Spleen (tissue), 13 donors: ENCODE measurements at regions of chr10 and their contacts with region 1.

Region 1: GRCh38 chr10:132452631-132453469 is 55.9 kb downstream of the PWWP2B start:
- DNase-seq: peak; percentile 98
- H3K4me3 ChIP-seq: peak overlapping the region in 5 of 8 donors; percentile 3 to 52 (median 9)
- H3K27ac ChIP-seq: peak overlapping the region; percentile 47 to 89 (median 72)
- H3K4me1 ChIP-seq: peaks cover 19 to 54% (median 34%) of the 10 kb centered on the region in 6 donors
- H3K27me3 ChIP-seq: peaks cover 0 to 3% (median 0%) of the 10 kb centered on the region in 7 donors
- CTCF ChIP-seq: peak; percentile 92 to 100 (median 99)
- POLR2A ChIP-seq: no peak

Region 2: DNA sequence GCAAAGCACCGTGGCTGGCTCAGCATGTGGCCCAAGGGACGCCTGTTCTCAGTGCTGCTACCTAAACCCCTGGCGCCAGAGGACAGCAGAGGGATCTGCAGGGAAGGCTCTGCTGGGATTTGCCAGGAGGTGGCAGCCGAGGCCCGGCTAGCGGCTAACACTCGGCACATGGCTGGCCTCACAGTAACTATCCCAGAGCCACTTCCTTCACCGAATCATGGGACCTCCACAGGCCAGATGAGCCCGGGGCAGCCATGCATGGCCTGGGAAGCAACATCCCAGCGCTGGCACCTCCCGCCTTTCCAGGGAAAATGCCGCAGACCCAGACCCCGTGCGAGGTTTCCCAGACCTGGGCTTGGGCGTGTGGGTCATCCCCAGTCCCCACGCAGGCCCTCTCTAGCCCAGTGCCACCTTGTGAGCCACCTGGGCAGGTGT is 229.7 kb before region 1 on chr10:
- intact Hi-C with region 1: loop called (anchors 5 kb)
- DNase-seq: peak; percentile 91
- H3K4me3 ChIP-seq: no peak overlapping the region
- H3K27ac ChIP-seq: peak overlapping the region in 1 of 8 donors; percentile 11
- H3K4me1 ChIP-seq: peaks cover 2 to 26% (median 13%) of the 10 kb centered on the region in 6 donors
- H3K27me3 ChIP-seq: no peaks in the 10 kb centered on the region
- CTCF ChIP-seq: peak; percentile 84 to 98 (median 91)
- POLR2A ChIP-seq: no peak

Region 3: DNA sequence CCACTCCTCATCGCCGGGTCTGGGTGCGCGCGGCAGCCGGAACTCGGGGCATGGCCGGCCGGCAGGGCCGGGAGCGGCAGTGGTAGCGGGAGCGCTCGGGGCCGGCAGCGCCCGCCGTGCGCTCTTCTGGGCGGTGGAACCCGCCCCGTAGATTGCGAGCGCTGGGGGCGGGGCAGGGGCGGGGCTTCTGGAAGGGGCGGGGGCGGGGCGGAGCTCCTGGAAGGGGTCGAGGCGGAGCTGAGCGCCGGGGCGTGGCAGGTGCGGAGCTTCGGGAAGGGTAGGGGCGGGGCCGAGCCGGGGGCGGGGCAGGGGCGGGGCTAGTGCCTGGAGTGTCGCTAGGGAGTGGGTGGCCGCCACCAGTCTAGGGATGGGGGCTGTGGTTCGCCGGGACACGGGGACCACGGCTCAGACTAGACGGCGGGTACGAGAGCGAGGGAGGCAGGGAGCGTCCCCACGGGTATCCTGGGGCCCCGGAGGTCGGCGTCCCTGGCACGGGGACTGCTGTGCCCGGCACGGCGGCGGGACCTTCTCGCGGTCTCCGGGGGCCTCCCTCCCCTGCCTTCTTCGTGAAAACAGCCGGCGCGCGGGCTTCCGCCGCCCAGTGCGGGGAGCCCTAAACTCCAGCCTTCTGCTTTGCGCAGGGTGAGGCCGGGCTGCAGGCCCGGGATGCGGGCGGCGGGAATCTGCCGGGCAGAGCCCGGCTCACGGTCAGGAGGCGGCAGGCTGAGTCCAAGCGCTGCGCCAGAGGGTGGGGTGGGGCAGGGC is 144.8 kb before region 1 on chr10 and contains the start of gene STK32C:
- intact Hi-C with region 1: no loop called
- DNase-seq: peak; percentile 97
- H3K4me3 ChIP-seq: peak within 1 kb of the TSS; percentile 92 to 99 (median 94)
- H3K27ac ChIP-seq: peak within 1 kb of the TSS; percentile 14 to 87 (median 80)
- H3K4me1 ChIP-seq: peaks cover 6 to 26% (median 20%) of the 10 kb centered on the region in 6 donors
- H3K27me3 ChIP-seq: peaks cover 0 to 44% (median 0%) of the 10 kb centered on the region in 7 donors
- CTCF ChIP-seq: peak in 2 of 11 experiments; percentile 9 to 24
- POLR2A ChIP-seq: peak in 1 of 3 donors; percentile 14
- total RNA-seq, gene STK32C: 9.6 to 27.8 (median 15.4) TPM

Region 4: DNA sequence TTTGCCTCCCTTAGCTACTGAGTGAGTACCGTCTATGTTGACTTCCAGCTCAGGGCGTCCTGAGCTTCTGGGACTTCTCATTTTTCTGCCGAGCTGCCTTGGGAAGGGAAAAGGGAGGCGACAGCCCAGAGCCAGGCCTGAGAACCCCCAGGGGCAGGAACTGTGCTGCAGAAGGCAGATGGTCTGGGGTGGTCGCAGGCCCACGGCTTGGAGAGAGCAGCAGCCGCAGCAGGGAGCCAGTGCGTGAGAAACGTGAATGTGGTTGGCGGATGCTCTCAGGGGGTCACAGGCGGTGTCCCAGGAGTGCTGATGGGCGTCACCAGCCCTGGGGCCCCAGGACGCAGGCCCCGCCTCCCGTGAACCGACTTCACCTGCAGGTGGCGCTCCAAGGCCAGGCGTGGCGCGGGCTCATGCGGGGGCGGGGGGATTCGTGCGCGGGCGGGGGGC is 65.1 kb before region 1 on chr10:
- intact Hi-C with region 1: loop called (anchors 5 kb)
- DNase-seq: peak; percentile 96
- H3K4me3 ChIP-seq: peak overlapping the region in 1 of 8 donors; percentile 51
- H3K27ac ChIP-seq: peak overlapping the region in 7 of 8 donors; percentile 54 to 77 (median 72)
- H3K4me1 ChIP-seq: peaks cover 14 to 64% (median 42%) of the 10 kb centered on the region in 6 donors
- H3K27me3 ChIP-seq: no peaks in the 10 kb centered on the region
- CTCF ChIP-seq: peak; percentile 77 to 93 (median 84)
- POLR2A ChIP-seq: no peak

Region 5: DNA sequence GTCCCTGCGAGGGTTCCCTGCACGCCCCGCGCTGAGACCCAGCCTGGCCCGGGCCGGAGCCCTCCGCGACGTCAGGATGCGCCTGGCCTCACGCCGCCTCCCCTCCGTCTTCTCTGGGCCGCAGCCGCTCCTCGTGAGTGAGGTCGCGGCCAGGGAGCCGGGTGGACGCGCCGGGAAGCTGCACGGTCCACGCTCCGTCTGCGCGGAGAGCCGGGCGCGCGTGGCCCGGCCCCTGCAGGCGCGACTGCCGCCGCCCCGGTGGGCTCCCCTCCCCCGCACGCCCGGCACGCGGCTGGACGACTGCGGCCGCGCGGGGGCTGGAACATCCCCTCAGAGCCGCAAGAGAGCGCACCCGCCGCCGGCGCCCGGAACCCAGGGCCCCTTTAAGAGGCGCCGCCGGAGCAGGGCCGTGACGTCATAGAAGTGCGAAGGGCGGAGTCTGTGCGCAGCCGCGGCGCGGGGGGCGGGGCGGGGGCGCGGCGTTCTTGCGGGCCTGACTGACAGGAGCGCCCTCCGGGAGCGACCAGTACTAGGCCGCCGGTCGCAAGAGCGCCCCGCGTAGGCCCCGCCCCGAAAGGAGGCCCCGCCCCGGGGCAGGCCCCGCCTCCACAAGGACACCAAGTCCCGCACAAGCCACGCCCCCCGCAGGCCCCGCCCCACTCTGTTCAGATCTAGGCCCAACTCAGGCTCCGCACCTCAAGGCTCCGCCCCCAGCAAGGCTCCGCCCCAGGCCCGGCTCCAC is 84.3 kb after region 1 on chr10:
- intact Hi-C with region 1: loop called (anchors 10 kb)
- DNase-seq: peak; percentile 100
- H3K4me3 ChIP-seq: peak overlapping the region; percentile 50 to 89 (median 60)
- H3K27ac ChIP-seq: peak overlapping the region; percentile 73 to 96 (median 88)
- H3K4me1 ChIP-seq: peaks cover 41 to 76% (median 61%) of the 10 kb centered on the region in 6 donors
- H3K27me3 ChIP-seq: no peaks in the 10 kb centered on the region
- CTCF ChIP-seq: peak in 8 of 11 experiments; percentile 11 to 66 (median 48)
- POLR2A ChIP-seq: peak in 1 of 3 donors; percentile 16